Right ventricle myocardium inferior (tissue), 1 donor: ENCODE measurements at regions of chr6 and their contacts with region 1.

Region 1: DNA sequence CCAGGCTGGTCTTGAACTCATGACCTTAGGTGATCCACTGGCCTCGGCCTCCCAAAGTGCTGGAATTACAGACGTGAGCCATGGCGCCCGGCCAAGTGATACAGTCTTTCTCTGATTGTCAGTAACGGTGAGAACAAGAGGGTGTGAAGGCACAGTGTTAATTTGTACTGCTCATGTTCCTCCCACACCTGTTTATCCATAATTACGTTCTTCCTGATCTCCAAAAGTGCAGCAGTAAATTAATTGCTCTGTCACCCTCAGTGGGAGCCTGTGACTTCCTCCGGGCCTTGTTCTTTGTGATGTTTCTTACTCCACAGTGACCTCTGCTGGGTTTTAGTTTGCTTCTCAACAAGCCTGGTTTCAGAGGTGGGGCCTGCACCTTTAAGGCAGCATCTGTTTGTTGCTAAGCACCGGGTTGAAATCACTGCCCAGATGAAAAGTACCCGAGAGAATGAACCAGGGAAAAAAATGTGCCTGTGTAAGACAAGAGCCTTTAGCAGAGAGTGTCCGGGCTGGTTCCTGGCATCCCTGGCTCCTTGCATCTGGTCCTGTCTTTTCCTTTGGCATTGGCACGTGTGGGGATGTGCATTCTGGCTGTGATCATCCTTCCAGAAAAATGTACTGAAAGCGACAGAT is 89.1 kb upstream of the CLDN20 start:
- DNase-seq: no peak
- ATAC-seq: peak; percentile 77

Region 2: GRCh38 chr6:154675602-154676088 is 499.0 kb before region 1 on chr6:
- intact Hi-C with region 1: loop called (anchors 5 kb)
- DNase-seq: peak; percentile 84
- ATAC-seq: peak; percentile 99

Region 3: GRCh38 chr6:154868143-154868594 is 306.5 kb before region 1 on chr6:
- intact Hi-C with region 1: loop called (anchors 5 kb)
- DNase-seq: no peak
- ATAC-seq: no peak

Region 4: DNA sequence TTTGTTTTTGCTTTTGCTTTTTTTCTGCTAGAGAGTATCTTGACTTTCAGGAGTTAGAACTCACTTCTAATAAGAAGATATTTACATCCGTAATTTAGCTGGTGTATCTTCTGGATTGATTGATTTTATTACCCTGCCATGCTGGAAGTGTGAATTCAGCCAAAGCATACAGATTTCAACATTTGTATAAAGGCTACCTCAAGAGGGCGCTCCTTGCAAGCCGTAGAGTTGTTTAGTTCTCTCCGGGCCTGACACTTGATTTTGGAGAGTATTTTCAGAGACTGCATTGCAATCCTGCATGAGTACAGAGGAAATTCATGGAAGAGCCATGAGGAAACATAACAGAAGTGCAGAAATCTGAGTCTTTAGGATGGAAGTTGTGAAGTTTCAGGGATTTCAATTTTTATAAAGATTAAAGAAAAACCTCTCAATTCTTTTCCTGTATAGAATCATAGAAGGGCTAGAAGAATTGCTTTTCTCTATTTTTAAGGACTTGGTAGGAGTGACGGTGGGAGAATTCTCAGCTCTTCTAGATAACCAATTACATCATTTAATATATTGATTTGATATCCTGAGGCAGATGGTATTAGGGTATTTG is 246.3 kb before region 1 on chr6:
- intact Hi-C with region 1: loop called (anchors 5 kb)
- DNase-seq: no peak
- ATAC-seq: no peak

Region 5: DNA sequence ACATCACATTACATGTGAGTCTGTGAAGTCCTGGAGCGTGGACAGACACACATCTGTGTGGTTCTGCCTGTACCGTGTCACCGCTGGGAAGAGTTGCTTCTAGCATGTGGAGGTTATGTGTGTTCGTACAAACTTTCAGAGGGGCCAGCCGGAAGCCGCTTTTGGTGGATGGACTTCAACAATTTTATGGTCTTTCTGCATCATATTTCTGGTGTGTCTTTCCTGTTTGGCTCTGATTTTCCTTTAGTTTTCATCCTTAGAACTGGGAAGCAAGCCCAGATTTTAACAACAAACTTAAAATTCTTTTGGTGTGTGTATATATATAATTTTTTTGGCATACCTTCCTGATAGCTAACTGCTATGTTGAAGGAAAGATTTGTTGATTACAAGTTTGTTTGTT is 108.3 kb before region 1 on chr6:
- intact Hi-C with region 1: no loop called
- DNase-seq: no peak
- ATAC-seq: no peak

Region 6: DNA sequence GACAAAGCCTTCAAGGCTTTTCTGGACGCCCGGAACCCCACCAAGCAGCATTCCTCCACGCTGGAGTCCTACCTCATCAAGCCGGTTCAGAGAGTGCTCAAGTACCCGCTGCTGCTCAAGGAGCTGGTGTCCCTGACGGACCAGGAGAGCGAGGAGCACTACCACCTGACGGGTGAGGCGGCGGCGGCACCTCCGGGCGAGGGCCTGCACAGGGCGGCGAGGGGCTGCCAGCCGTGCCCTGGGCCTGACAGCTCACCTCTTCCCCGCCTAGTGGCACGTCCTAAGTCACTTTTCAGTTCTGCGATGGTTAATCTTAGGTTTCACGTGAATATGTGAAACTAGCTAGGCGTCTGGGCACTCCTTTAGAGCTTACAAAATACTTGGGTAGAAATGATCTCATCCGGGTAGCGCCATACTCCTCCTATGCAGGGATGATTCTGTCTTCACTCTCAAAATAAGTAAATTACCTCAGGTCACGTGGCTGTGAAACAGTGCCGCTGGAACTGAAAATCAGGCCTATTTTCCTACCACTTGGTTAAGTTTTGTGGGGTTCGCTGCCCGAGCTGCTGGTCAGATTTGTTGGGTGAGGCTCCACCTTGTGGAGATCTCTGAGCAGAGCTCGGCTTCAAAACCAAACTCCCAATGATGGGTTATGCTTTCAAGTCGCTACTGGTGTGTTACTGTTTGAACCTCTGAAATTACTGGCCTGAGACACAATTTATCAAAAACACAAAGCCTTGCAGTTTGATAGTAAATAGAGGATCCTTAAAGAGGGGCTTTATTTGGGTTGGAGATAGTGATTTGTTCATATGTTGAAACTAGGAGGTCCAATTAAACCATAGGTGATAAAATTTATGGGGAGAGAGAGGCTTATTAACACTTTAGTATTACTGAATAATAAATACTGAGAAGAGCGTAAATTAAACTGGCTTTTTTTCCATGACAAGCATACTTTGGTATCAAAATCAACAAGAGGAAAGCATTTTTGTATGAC is 73.6 kb after region 1 on chr6:
- intact Hi-C with region 1: loop called (anchors 2 kb)
- DNase-seq: no peak
- ATAC-seq: peak; percentile 43

Region 7: GRCh38 chr6:155314092-155314772 is 139.5 kb after region 1 on chr6 and contains the start of gene TFB1M:
- intact Hi-C with region 1: loop called (anchors 5 kb)
- DNase-seq: peak; percentile 99
- ATAC-seq: peak; percentile 99
- total RNA-seq, gene TFB1M: 17.9 TPM

Region 8: DNA sequence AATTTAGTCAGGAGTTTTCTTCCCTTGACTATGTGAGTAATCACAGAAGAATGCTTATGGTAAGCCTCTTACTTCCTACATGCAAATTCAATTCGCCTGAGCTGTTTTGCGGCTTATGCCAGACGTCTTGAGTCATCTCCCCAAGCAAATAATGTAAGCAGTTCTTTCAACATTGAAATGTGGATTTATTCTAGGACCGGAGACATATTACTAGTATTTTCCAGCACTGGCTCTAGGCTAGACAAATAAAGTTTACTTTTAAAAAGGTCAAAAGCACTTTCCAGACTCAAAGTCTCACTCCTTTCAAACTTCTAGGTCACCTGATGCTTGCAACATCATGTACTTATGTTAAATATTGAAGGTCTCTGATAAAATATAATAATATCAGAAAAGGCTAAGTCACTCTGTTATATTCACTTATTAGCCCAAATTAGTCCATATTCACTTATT is 319.0 kb after region 1 on chr6:
- intact Hi-C with region 1: no loop called
- DNase-seq: no peak
- ATAC-seq: peak; percentile 65

Region 9: DNA sequence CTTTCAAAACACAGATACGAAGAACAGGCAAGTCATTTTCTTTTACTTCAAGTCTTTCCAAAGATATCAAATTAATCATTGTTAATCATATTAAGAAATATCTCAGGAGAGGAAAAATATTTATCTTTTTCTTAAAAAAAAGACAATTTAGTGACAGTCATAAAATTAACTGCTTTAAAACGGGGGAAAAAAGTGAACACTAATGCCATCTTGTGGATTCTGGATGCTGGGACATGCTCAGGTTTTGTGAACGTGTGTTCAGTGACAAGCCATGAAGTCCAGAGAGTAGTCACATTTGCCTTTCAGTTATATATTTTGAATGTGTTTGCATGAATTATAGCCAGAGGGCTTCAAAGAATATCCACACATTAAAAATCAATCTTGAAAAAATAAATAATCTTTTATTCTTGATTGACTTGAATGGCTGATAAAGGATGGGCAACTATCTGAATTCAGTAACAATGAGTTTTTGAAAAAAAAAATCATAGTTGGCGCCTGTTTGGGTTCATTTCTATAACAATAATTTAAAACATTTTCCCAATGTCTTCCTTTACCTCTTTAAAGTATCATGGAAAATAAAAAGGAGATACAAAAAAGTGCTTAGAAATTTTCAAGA is 355.6 kb after region 1 on chr6:
- intact Hi-C with region 1: no loop called
- DNase-seq: no peak
- ATAC-seq: no peak